Activated CD8-positive, alpha-beta T cell treated with anti-CD3 and anti-CD28 coated beads for 36 hours (primary cell): ENCODE measurements at regions of chr6 and their contacts with region 1.

Region 1: DNA sequence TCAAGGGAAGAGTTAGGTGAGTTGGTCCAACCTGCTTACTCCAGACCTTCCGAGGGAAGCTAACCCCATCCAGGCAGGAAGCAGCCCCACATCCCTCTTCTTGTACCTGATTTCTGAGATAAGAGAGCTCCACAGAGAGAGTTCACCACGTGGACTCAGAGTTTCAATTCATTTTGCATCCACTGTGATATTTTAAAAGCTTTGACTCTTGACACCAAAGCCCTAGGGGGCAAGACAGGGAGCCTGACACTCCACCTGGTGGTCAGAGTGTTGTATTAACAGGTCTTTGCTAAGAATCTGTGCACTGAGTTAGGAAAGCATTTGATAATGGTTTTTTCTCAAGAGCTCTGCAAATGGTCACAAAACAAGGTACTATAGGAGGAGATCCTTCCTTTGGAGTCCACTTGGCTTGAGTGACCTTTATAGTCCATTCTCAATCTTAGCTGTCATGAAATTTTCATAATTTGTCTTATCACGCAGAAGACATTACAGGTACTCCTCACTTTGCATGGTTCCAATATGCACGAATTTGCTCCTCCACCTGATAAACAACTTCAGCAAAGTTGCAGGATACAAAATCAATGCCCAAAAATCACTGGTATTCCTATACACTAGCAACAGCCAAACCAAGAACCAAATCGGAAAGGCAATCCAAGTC is 56.2 kb upstream of the RIPOR2 start:
- DNase-seq: peak; percentile 79
- ATAC-seq: peak; percentile 94
- H3K4me3 Mint-ChIP-seq: peak overlapping the region; percentile 14
- H3K27ac Mint-ChIP-seq: peak overlapping the region; percentile 89
- H3K4me1 Mint-ChIP-seq: peaks cover 49% of the 10 kb centered on the region
- H3K27me3 Mint-ChIP-seq: no peaks in the 10 kb centered on the region
- CTCF ChIP-seq: peak; percentile 78

Region 2: DNA sequence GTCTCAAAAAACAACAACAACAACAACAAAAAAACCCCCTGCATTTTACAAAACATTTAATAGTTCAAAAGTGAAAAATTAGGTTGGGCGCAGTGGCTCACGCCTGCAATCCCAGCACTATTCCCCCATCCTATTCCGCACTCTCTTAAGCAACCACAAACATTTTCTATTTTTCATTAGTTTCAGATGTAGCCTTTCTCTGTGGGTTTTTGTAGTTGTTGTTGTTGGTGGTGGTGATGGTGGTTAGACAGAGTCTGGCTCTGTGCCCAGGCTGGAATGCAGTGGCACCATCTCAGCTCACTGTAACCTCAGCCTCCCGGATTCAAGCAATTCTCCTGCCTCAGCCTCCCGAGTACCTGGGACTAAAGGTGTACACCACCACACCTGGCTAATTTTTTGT is 223.6 kb before region 1 on chr6:
- CTCF ChIA-PET with region 1: no interaction called
- POLR2A ChIA-PET with region 1: no interaction called
- intact Hi-C with region 1: no loop called
- DNase-seq: no peak
- ATAC-seq: no peak
- H3K4me3 Mint-ChIP-seq: no peak overlapping the region
- H3K27ac Mint-ChIP-seq: no peak overlapping the region
- H3K4me1 Mint-ChIP-seq: peaks cover 2% of the 10 kb centered on the region
- H3K27me3 Mint-ChIP-seq: no peaks in the 10 kb centered on the region
- CTCF ChIP-seq: no peak

Region 3: DNA sequence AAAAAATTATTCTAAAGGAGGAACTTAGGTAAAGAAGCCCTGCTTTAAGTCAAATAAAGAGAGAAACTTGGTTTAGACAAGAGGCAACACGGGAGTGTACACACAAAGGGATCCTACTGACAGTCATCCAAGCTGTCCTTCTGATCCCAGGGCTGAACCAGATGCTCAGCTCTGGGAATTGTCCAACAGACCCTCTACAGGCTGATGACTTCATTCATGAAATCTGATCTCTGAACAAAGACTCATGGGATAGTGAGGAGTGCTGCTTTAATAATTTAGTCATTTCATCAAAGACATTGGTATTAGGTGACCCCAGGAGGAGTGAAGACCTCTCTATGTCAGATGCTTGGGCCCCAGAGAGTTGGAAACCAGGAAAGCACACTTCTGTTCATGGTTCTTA is 127.6 kb before region 1 on chr6:
- CTCF ChIA-PET with region 1: interaction called, 20 read pairs
- POLR2A ChIA-PET with region 1: interaction called, 4 read pairs
- intact Hi-C with region 1: no loop called
- DNase-seq: no peak
- ATAC-seq: no peak
- H3K4me3 Mint-ChIP-seq: no peak overlapping the region
- H3K27ac Mint-ChIP-seq: peak overlapping the region; percentile 86
- H3K4me1 Mint-ChIP-seq: peaks cover 84% of the 10 kb centered on the region
- H3K27me3 Mint-ChIP-seq: no peaks in the 10 kb centered on the region
- CTCF ChIP-seq: no peak

Region 4: DNA sequence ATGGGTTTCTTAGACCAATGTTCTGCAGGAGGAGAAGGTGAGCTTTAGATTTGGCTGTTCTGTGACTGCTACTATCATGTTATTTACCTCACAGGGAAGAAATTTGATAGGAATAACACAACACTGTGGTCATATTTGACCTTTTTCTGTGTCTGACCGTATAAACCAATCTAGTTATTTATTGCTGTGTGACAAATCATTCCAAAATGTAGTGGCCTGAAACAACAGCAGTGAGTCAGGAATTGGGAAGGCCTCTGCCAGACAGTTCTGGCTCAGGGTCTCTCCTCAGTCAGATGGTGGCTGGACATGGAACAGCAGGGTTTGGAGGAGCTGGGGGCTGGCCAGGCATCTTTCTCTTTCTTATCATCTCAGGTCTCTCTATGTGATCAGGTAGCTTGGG is 89.2 kb before region 1 on chr6:
- CTCF ChIA-PET with region 1: interaction called, 33 read pairs
- POLR2A ChIA-PET with region 1: no interaction called
- intact Hi-C with region 1: no loop called
- DNase-seq: no peak
- ATAC-seq: no peak
- H3K4me3 Mint-ChIP-seq: no peak overlapping the region
- H3K27ac Mint-ChIP-seq: peak overlapping the region; percentile 87
- H3K4me1 Mint-ChIP-seq: peaks cover 90% of the 10 kb centered on the region
- H3K27me3 Mint-ChIP-seq: no peaks in the 10 kb centered on the region
- CTCF ChIP-seq: no peak

Region 5: DNA sequence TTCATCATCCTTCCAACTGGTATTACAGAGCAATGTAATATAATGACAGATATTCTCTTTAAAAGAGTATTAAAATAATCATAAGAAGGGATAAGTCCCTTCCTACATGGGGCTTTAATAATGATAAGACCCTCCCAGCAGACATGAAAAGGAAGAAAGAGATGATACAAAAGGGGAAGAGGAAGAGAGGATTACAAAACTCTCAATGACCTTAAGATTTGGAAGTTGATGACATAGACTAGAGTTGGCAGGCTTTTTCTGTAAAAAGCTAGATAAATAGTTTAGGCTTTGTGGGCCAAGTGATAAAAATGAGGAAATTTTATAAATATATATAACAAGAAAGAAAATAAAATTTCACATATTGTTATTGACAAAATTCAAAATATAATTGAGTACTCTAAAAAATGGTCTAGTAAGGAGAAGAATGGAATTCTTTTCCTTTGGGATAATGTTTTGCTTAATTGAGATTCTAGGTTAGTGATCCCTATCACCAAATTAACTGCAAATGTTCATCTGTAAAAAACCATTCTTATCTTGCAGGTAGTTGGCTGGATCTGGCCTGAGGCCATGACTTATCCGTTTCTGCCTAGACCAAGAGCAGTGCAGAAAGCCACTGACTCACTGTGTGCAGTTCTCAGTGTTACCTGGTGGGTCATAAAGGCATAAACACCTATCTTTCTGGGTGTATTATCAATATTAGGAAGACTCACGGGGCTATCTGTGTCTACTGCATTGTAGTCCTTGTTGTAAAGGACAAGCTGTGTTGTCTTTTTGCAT is 67.2 kb before region 1 on chr6:
- CTCF ChIA-PET with region 1: interaction called, 18 read pairs
- POLR2A ChIA-PET with region 1: interaction called, 10 read pairs
- intact Hi-C with region 1: loop called (anchors 2 kb)
- DNase-seq: peak; percentile 75
- ATAC-seq: peak; percentile 61
- H3K4me3 Mint-ChIP-seq: peak overlapping the region; percentile 62
- H3K27ac Mint-ChIP-seq: peak overlapping the region; percentile 94
- H3K4me1 Mint-ChIP-seq: peaks cover 72% of the 10 kb centered on the region
- H3K27me3 Mint-ChIP-seq: peaks cover 4% of the 10 kb centered on the region
- CTCF ChIP-seq: no peak

Region 6: DNA sequence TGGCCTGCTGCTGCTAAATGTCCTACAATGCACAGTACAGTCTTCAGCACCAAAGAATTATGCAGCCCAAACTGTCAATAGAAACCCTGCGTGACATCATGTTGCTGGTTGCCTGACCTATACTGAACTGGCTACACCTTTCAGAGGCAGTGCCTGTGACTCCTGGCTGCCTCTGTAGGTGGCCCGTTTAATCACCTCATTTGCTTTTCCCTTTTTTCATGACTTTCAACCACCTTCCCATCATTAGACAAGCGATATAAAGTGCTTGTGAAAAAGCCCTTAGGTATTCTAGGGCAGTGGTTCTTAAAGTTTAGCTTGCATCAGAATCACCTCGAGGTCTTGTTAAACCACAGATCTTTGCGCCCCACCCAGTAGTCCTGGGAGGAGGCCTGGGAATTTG is 23.2 kb before region 1 on chr6:
- CTCF ChIA-PET with region 1: interaction called, 28 read pairs
- POLR2A ChIA-PET with region 1: interaction called, 5 read pairs
- intact Hi-C with region 1: no loop called
- DNase-seq: peak; percentile 37
- ATAC-seq: peak; percentile 73
- H3K4me3 Mint-ChIP-seq: no peak overlapping the region
- H3K27ac Mint-ChIP-seq: no peak overlapping the region
- H3K4me1 Mint-ChIP-seq: peaks cover 49% of the 10 kb centered on the region
- H3K27me3 Mint-ChIP-seq: no peaks in the 10 kb centered on the region
- CTCF ChIP-seq: no peak

Region 7: DNA sequence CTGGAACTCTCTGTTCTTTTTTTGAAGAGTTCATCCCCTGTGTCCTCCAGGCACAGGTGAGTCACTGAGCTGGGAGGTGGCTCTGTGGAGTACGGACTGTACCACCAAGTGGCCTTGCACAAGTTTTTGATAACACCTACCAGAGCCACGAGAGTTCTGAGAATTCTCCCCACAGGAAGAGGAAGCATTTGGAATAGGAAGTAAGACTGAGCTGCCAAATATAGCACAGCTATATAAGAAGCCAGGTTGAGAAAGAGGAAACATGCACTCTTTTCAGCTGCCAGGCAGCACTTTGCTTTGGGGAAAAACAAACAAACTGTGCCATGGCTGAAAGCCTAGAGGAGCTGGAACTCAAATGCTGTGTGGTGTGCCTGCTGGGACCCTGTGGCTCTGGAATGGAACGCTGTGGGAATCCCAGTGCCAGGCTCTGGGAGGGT is 14.6 kb after region 1 on chr6:
- CTCF ChIA-PET with region 1: interaction called, 118 read pairs
- POLR2A ChIA-PET with region 1: interaction called, 7 read pairs
- intact Hi-C with region 1: no loop called
- DNase-seq: peak; percentile 75
- ATAC-seq: peak; percentile 72
- H3K4me3 Mint-ChIP-seq: peak overlapping the region; percentile 52
- H3K27ac Mint-ChIP-seq: peak overlapping the region; percentile 94
- H3K4me1 Mint-ChIP-seq: peaks cover 82% of the 10 kb centered on the region
- H3K27me3 Mint-ChIP-seq: no peaks in the 10 kb centered on the region
- CTCF ChIP-seq: no peak

Region 8: DNA sequence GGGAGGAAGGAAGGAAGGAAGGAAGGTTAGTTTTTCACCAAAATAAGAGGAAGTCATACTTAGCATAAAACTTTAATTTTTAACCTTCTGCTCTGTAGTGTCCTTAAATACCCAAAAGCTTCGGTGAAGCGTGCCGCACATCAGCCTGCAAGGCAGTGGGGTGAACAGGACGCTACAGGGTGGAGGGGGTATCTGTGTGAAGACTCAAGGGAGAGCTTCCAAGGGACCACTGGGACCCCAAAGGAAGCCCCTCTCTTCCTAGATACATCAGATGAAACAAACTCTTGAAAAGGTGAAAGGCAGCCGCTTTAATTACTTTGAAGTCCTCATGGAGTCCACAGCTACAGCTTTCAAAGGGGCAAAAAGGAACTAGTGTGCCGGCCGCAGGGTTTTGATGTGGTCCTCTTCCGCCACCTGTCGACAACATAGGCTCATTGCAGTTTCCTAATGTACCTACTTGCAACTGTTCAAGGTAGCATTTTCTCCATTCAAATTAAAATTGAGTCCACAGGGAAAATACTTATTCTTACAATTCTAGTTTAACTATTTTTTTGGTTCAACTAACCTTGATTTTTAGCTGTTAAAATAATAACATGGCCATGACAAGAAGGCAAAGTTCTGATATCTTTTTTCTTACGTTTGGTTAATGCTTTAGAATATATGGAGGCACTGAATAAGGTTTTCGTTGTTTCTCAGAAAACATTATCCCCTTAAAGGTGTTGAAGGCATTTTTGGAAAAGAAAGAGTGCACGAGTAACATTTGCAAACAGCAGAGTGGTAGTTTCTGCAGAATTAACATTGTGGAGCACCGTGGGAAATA is 78.8 kb after region 1 on chr6:
- CTCF ChIA-PET with region 1: interaction called, 29 read pairs
- POLR2A ChIA-PET with region 1: no interaction called
- intact Hi-C with region 1: no loop called
- DNase-seq: peak; percentile 92
- ATAC-seq: peak; percentile 99
- H3K4me3 Mint-ChIP-seq: peak overlapping the region; percentile 68
- H3K27ac Mint-ChIP-seq: peak overlapping the region; percentile 94
- H3K4me1 Mint-ChIP-seq: peaks cover 6% of the 10 kb centered on the region
- H3K27me3 Mint-ChIP-seq: no peaks in the 10 kb centered on the region
- CTCF ChIP-seq: peak; percentile 87